CD4-positive, alpha-beta T cell (primary cell): ENCODE measurements at regions of chr2 and their contacts with region 1.

Region 1: DNA sequence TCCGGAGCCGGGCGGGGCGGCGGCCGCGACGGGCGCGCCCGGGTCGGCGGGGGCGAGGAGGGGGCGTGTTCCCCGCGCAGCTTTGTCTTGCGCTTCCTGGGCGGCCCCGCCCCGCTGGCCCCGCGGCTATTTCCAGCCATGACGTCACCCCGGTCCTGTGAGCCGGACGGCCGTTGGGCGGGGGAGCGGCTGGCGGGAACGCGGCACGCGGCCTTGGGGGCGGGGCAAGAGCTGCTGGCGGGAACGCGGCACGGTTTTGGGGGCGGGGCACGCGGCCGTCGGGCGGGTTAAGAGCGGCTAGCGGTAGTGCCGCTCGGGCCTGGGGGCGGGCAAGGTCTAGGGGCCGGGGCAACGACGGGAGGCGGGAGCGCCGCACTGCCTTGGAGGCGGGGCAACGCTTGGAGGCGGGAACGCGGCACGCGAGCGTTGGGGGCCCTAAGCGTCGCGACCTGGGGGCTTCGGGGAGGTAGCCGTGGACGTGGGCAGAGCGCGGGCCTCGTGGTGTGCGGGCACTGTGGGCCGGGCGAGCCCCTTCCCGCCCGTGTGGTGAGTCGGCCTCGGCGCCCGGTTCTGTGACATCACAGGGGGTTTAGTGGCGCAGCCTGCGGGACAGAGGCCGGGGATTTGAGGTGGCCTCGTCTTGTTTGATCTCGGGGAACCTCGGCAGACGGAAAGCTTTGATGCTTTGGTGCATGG is 704 bp downstream of the KLF11 start:
- DNase-seq: peak; percentile 79 to 97 (median 88)
- ATAC-seq: peak; percentile 63
- H3K4me3 ChIP-seq: peak overlapping the region; percentile 52
- H3K4me3 Mint-ChIP-seq: peak overlapping the region; percentile 81
- H3K27ac ChIP-seq: peak overlapping the region; percentile 77 to 79
- H3K27ac Mint-ChIP-seq: peak overlapping the region; percentile 89
- H3K4me1 ChIP-seq: peaks cover 29% of the 10 kb centered on the region
- H3K4me1 Mint-ChIP-seq: peaks cover 31% of the 10 kb centered on the region
- H3K27me3 ChIP-seq: no peaks in the 10 kb centered on the region
- H3K27me3 Mint-ChIP-seq: no peaks in the 10 kb centered on the region
- CTCF ChIP-seq: no peak

Region 2: GRCh38 chr2:9142551-9143263 is 901.3 kb before region 1 on chr2:
- CTCF ChIA-PET with region 1: no interaction called
- POLR2A ChIA-PET with region 1: no interaction called
- intact Hi-C with region 1: loop called in 1 of 2 experiments (anchors 5 kb)
- DNase-seq: peak; percentile 50 to 83 (median 70)
- ATAC-seq: peak; percentile 95
- H3K4me3 ChIP-seq: peak overlapping the region; percentile 20
- H3K4me3 Mint-ChIP-seq: no peak overlapping the region
- H3K27ac ChIP-seq: no peak overlapping the region
- H3K27ac Mint-ChIP-seq: no peak overlapping the region
- H3K4me1 ChIP-seq: peaks cover 7% of the 10 kb centered on the region
- H3K4me1 Mint-ChIP-seq: peaks cover 5% of the 10 kb centered on the region
- H3K27me3 ChIP-seq: peaks cover 0 to 6% of the 10 kb centered on the region in 2 experiments
- H3K27me3 Mint-ChIP-seq: peaks cover 39% of the 10 kb centered on the region
- CTCF ChIP-seq: peak; percentile 87

Region 3: GRCh38 chr2:9474361-9474967 is 569.6 kb before region 1 on chr2 and contains the start of gene IAH1:
- CTCF ChIA-PET with region 1: no interaction called
- POLR2A ChIA-PET with region 1: interaction called, 3 read pairs
- intact Hi-C with region 1: loop called in 1 of 2 experiments (anchors 10 kb)
- DNase-seq: peak; percentile 54 to 90 (median 75)
- ATAC-seq: peak; percentile 81
- H3K4me3 ChIP-seq: peak within 1 kb of the TSS; percentile 82
- H3K4me3 Mint-ChIP-seq: peak within 1 kb of the TSS; percentile 88
- H3K27ac ChIP-seq: peak within 1 kb of the TSS; percentile 90
- H3K27ac Mint-ChIP-seq: peak within 1 kb of the TSS; percentile 92
- H3K4me1 ChIP-seq: peaks cover 37% of the 10 kb centered on the region
- H3K4me1 Mint-ChIP-seq: peaks cover 59% of the 10 kb centered on the region
- H3K27me3 ChIP-seq: no peaks in the 10 kb centered on the region
- H3K27me3 Mint-ChIP-seq: no peaks in the 10 kb centered on the region
- CTCF ChIP-seq: no peak
- total RNA-seq, gene IAH1: 54.8 to 57.3 TPM

Region 4: DNA sequence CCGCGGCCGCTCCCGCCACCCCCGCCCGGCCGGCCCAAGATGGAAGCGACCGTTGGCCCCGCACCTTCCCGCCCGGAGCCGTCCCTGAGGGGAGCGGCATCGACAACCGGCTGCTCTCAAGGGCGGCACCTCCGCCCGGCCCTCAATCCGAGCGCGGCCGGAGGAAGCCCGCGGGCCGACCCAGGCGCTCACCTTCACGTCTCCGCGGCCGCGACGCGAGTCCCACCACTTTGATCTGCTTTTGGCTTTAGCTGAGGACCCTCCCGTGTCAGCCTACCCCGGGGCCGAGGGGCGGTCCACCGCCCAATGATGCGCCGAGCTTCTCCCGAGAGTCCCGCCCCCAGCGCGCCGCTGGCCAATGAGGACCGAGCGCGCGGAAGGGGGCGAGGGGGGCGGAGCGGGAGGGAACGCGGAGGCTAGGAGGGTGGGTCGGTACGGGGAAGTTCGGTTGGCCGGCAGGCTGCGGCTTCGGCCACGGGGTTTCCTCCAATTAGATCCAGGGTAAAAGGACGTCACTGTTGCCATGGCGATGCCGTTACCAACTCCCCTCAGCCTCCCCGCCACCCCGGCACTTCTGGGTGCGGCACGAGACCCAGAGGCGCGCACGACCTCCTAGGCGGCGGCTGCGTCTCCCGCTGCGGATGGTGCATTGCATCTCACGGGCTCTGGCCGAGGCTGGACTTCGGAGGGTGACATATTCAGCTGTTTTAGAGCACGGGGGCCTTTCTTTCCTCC is 413.1 kb before region 1 on chr2 and contains the start of gene YWHAQ:
- CTCF ChIA-PET with region 1: interaction called, 3 read pairs
- POLR2A ChIA-PET with region 1: interaction called, 7 read pairs
- intact Hi-C with region 1: loop called in 1 of 2 experiments (anchors 10 kb)
- DNase-seq: peak; percentile 93 to 99 (median 96)
- ATAC-seq: peak; percentile 85
- H3K4me3 ChIP-seq: peak within 1 kb of the TSS; percentile 93
- H3K4me3 Mint-ChIP-seq: peak within 1 kb of the TSS; percentile 98
- H3K27ac ChIP-seq: peak within 1 kb of the TSS; percentile 77 to 81
- H3K27ac Mint-ChIP-seq: peak within 1 kb of the TSS; percentile 96
- H3K4me1 ChIP-seq: peaks cover 42% of the 10 kb centered on the region
- H3K4me1 Mint-ChIP-seq: peaks cover 56% of the 10 kb centered on the region
- H3K27me3 ChIP-seq: no peaks in the 10 kb centered on the region
- H3K27me3 Mint-ChIP-seq: no peaks in the 10 kb centered on the region
- CTCF ChIP-seq: no peak
- total RNA-seq, gene YWHAQ: 95.8 to 101 TPM

Region 5: DNA sequence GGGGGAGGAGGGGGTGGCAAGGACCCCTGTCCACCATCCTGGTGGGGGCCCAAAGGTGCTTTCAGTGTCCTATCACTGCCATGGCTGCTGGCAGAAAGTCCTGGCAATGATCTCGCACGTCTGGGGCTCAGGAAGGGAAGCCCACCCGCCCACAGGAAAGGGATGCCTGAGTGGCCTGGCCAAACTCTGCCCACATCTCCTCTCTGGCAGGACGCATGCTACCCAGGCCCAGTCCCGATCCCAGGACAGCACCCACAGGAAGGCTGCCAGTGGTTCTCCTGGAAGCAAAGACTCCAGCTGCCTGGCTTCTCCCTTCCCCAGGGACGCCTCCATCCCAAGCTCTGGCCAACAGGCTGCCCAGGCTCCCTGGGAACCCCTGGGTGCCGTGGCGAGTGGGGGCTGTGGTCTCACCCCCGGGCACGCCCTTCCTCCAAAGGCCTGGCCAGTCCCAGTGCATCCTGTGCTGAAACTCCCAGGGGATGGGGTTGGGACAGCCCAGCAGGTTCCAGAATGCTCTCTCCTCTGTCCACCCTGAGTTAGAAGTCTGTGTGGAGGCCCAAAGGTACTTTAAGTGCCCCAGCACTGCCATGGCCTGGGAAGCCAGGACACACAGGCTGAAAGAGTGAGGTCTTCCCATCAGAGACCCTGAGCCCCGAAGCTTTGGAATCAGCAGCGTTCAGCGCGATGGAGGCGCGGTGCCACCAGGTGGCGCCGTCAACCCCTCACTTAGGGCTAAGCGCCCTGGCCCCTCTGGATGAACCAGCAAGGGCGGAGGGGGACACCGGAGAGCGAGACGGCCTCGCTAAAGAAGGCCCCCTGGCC is 230.5 kb before region 1 on chr2:
- CTCF ChIA-PET with region 1: interaction called, 42 read pairs
- POLR2A ChIA-PET with region 1: interaction called, 5 read pairs
- intact Hi-C with region 1: loop called (anchors 1 kb)
- DNase-seq: peak; percentile 40 to 82 (median 60)
- ATAC-seq: peak; percentile 83
- H3K4me3 ChIP-seq: no peak overlapping the region
- H3K4me3 Mint-ChIP-seq: no peak overlapping the region
- H3K27ac ChIP-seq: no peak overlapping the region
- H3K27ac Mint-ChIP-seq: no peak overlapping the region
- H3K4me1 ChIP-seq: peaks cover 10% of the 10 kb centered on the region
- H3K4me1 Mint-ChIP-seq: peaks cover 25% of the 10 kb centered on the region
- H3K27me3 ChIP-seq: no peaks in the 10 kb centered on the region
- H3K27me3 Mint-ChIP-seq: peaks cover 4% of the 10 kb centered on the region
- CTCF ChIP-seq: peak; percentile 86

Region 6: DNA sequence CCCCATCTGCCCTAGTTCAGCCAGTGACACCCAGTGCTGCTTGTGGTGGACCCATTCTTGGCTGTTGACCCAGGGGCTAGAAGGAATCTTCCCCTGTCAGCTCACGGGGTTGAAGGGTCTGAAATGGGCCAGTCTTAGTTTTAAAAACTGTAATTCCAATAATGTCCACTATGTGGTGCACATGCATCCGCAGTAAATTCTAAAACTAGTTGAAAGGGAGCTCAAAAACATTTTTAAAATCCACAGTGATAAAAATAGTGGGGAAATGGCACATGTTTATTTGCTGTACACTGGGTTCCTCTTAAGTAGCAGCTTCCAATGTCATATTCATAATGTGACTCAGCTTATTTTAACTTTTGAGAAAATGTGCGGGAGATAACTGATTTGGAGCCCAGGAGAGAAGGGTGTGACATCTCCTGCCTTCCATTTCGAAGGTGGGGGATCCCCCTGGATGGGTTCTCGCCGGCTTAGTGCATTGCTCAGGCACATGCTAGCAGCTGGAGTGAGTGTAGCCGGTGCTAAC is 59.8 kb before region 1 on chr2:
- CTCF ChIA-PET with region 1: interaction called, 107 read pairs
- POLR2A ChIA-PET with region 1: interaction called, 30 read pairs
- intact Hi-C with region 1: loop called (anchors 1 kb)
- DNase-seq: peak in 4 of 14 experiments; percentile 24 to 81 (median 71)
- ATAC-seq: peak; percentile 90
- H3K4me3 ChIP-seq: no peak overlapping the region
- H3K4me3 Mint-ChIP-seq: no peak overlapping the region
- H3K27ac ChIP-seq: no peak overlapping the region
- H3K27ac Mint-ChIP-seq: no peak overlapping the region
- H3K4me1 ChIP-seq: peaks cover 7% of the 10 kb centered on the region
- H3K4me1 Mint-ChIP-seq: peaks cover 16% of the 10 kb centered on the region
- H3K27me3 ChIP-seq: no peaks in the 10 kb centered on the region
- H3K27me3 Mint-ChIP-seq: peaks cover 9% of the 10 kb centered on the region
- CTCF ChIP-seq: peak; percentile 83